Activated naive CD4-positive, alpha-beta T cell treated with anti-CD3 and anti-CD28 coated beads for 36 hours (primary cell): ENCODE measurements at regions of chr9 and their contacts with region 1.

Region 1: GRCh38 chr9:20622330-20623020 is at the start of gene MLLT3:
- DNase-seq: peak; percentile 97
- H3K4me3 Mint-ChIP-seq: peak within 1 kb of the TSS; percentile 98
- H3K27ac Mint-ChIP-seq: peak within 1 kb of the TSS; percentile 95
- H3K4me1 Mint-ChIP-seq: peaks cover 36% of the 10 kb centered on the region
- H3K27me3 Mint-ChIP-seq: no peaks in the 10 kb centered on the region
- total RNA-seq, gene MLLT3: 44.3 to 51.4 TPM

Region 2: GRCh38 chr9:19925817-19926503 is 696.5 kb before region 1 on chr9:
- CTCF ChIA-PET with region 1: no interaction called
- intact Hi-C with region 1: loop called (anchors 1 kb)
- DNase-seq: peak; percentile 90
- H3K4me3 Mint-ChIP-seq: peak overlapping the region; percentile 57
- H3K27ac Mint-ChIP-seq: no peak overlapping the region
- H3K4me1 Mint-ChIP-seq: peaks cover 18% of the 10 kb centered on the region
- H3K27me3 Mint-ChIP-seq: peaks cover 2% of the 10 kb centered on the region

Region 3: DNA sequence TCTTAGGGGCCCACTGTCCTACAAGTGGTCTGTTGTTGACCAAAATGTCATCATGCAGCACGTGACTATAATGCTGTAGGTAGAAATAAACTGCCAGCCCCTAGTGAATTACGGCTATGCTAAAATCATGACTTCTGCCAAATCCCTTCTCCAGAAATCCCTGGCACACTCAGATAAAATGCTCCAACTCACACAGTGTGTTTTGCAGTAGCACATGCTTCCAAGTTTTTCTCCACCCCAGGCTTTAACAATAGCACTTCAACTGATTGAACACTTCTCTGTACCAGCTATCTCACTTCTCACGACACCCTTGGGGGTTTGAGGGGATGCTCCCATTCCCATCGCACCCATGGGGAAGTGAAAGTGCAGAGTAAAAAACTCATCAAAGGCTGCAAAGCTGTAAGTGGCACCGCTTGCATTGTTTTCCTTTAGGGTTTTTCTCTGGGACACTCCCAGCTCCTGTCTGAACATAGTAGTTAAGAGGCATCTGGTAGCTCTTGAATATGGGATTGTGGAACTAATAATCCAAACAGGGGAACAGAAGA is 682.7 kb before region 1 on chr9:
- CTCF ChIA-PET with region 1: no interaction called
- intact Hi-C with region 1: no loop called
- DNase-seq: no peak
- H3K4me3 Mint-ChIP-seq: no peak overlapping the region
- H3K27ac Mint-ChIP-seq: no peak overlapping the region
- H3K4me1 Mint-ChIP-seq: no peaks in the 10 kb centered on the region
- H3K27me3 Mint-ChIP-seq: peaks cover 6% of the 10 kb centered on the region

Region 4: GRCh38 chr9:20242510-20243189 is 379.8 kb before region 1 on chr9:
- CTCF ChIA-PET with region 1: no interaction called
- intact Hi-C with region 1: loop called (anchors 5 kb)
- DNase-seq: peak; percentile 52
- H3K4me3 Mint-ChIP-seq: no peak overlapping the region
- H3K27ac Mint-ChIP-seq: no peak overlapping the region
- H3K4me1 Mint-ChIP-seq: peaks cover 60% of the 10 kb centered on the region
- H3K27me3 Mint-ChIP-seq: no peaks in the 10 kb centered on the region

Region 5: DNA sequence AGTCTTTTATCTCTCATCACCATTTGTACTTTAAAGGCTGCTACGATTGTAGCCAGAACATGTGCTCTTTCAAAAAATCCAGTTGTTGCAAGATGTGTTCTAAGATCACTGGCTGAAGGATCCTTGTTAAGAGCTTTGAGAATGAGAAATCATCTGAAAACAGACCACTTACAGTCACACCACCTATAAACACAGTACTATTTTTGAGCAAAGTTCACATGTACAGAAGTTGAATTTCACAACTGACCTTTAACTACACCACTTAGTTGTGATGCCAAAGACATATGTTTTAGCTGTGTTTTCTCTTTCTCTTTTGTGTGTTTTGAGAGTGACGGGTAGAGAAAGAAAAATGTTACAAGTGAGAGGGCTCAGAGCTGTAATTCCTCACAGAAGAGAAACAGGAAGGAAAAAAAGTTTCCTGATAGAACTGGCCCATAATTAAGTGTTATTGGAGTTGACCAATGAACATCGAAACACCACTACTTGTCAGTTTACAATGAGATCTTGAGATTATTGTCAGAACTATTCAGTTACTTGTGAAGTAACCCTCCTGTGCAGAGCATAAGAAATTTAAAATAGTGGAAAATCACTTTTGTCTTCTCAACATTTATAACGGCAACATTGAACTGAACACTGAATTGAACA is 245.6 kb before region 1 on chr9:
- CTCF ChIA-PET with region 1: no interaction called
- intact Hi-C with region 1: loop called (anchors 5 kb)
- DNase-seq: no peak
- H3K4me3 Mint-ChIP-seq: peak overlapping the region; percentile 58
- H3K27ac Mint-ChIP-seq: peak overlapping the region; percentile 76
- H3K4me1 Mint-ChIP-seq: peaks cover 62% of the 10 kb centered on the region
- H3K27me3 Mint-ChIP-seq: no peaks in the 10 kb centered on the region

Region 6: DNA sequence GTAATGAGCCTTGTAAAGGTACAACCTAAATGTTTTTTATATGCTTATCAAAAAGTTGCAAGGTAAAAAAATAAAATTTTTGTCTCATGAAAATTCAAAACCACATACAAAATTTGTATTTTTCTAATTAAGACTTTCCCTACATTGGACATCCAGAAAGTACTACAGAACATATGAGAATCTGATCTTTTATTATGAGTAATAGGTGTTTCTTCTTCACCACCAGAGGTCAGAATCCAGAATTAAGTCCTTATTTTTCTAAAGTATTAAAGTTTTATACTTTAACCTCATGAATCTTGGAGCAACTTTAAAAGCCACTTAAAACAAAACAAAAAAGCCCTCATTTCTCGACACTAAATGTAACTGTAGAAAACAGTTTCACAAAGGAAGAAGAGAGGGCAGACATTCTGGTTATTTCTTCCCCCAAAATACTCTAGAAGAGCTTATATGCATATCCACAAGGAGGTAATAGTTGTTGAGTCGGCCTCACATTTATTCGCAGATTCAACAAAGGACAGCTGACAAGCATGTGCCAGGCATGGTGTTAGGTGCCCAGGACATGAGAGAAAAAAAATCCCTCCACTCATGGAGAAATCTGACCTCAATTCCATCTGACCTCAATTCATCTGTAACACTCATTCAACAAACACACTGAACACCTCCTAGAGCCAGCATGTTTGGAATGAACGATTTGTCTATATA is 69.5 kb before region 1 on chr9:
- CTCF ChIA-PET with region 1: interaction called, 5 read pairs
- intact Hi-C with region 1: loop called (anchors 1 kb)
- DNase-seq: no peak
- H3K4me3 Mint-ChIP-seq: peak overlapping the region; percentile 1
- H3K27ac Mint-ChIP-seq: peak overlapping the region; percentile 2
- H3K4me1 Mint-ChIP-seq: peaks cover 68% of the 10 kb centered on the region
- H3K27me3 Mint-ChIP-seq: no peaks in the 10 kb centered on the region

Region 7: DNA sequence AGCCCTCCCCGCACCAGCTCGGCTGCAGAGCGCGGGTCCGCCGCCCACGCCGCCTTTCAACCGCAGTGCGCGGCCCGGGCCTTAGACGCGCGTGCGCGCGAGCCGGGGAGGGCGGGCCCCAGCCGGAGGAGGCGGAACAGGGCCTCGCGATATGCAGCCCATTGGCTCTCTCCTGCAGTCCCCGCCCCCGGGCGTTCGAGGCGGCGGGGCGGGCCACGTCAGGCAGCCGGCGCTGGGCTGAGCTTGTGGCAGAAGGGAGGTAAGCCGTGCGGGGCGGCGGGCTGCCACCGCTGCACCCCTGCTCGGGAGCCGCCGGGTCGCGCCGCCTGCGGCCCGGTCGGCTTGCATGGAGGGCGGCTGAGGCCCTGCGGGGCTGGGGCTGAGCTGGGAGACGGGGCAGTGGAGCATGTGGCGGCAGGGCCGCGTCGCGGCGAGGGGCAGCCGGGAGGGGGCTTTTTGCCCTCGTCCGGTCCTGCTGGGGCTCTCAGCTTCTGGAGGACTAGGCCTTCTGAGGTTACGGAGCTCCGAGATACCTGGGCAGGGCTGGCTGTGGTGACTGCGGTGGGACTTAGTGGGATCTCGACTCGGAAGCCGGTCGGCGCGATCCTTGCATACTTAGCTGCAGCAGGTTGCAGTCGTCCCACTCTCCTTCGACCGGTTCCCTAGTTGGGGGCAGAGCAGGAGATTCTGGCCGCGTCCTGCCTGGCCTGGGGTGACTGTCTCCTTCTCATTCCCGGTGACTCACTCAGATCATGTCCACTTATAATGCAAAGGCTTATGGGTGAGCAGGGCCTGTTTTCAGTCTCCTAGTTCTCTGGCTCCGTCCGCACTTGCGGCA is 61.8 kb after region 1 on chr9 and contains the start of gene FOCAD:
- CTCF ChIA-PET with region 1: interaction called, 16 read pairs
- intact Hi-C with region 1: loop called (anchors 1 kb)
- DNase-seq: peak; percentile 95
- H3K4me3 Mint-ChIP-seq: peak within 1 kb of the TSS; percentile 88
- H3K27ac Mint-ChIP-seq: peak within 1 kb of the TSS; percentile 76
- H3K4me1 Mint-ChIP-seq: peaks cover 17% of the 10 kb centered on the region
- H3K27me3 Mint-ChIP-seq: no peaks in the 10 kb centered on the region
- total RNA-seq, gene FOCAD: 31.7 to 32.2 TPM

Region 8: GRCh38 chr9:21031091-21031807 is 408.8 kb after region 1 on chr9 and contains the start of gene HACD4:
- CTCF ChIA-PET with region 1: no interaction called
- intact Hi-C with region 1: loop called (anchors 1 kb)
- DNase-seq: peak; percentile 78
- H3K4me3 Mint-ChIP-seq: peak within 1 kb of the TSS; percentile 49
- H3K27ac Mint-ChIP-seq: peak within 1 kb of the TSS; percentile 69
- H3K4me1 Mint-ChIP-seq: peaks cover 25% of the 10 kb centered on the region
- H3K27me3 Mint-ChIP-seq: no peaks in the 10 kb centered on the region
- total RNA-seq, gene HACD4: 1.1 to 1.6 TPM